Left cardiac atrium (tissue), 4 donors: ENCODE measurements at regions of chrX and their contacts with region 1.

Region 1: GRCh38 chrX:115147220-115147619 is 42.0 kb upstream of the RBMXL3 start:
- DNase-seq: no peak
- ATAC-seq: no peak

Region 2: GRCh38 chrX:114611018-114611619 is 536.1 kb before region 1 on chrX:
- intact Hi-C with region 1: loop called in 1 of 2 experiments (anchors 10 kb)
- DNase-seq: no peak
- ATAC-seq: no peak

Region 3: GRCh38 chrX:115112411-115112810 is 34.8 kb before region 1 on chrX:
- intact Hi-C with region 1: no loop called
- DNase-seq: no peak
- ATAC-seq: no peak